ENCODE measurements at regions of chr5 and their contacts with region 1.

Region 1: DNA sequence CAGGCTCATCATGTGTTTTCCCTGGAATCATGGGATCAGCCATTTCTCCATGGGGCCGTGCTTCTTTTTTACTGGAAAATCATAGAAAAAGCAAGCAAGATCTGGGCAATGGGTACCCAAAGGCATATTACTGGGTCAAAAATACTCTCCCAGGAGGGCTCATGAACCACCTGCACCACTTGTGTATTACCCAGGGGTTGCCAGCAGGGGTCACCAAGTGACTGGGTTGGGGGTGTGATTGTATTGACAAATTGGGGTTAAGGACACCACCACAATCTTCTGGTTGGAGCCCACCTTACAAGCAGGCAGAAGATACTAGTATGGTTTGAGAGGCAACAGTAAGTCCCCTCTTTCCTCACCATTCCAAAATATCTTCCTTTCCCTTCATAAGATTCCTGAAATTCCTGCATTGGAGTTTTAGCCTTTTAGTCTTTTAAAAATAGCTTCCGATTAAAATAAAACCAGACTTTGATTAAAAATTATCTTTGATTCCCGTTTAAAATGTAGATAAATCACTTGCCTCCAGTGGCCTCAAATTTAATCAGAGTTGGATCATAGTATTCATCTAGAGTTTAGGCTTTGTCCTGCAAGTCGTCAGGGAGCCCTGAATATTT is 603.3 kb downstream of the KIF4B start:
- DNase-seq: no peak
- ATAC-seq: peak; percentile 44; the same call in 1 of the 2 replicates
- H3K4me3 ChIP-seq: no peak overlapping the region
- H3K27ac ChIP-seq: no peak overlapping the region
- H3K4me1 ChIP-seq: no peaks in the 10 kb centered on the region
- H3K27me3 ChIP-seq: no peaks in the 10 kb centered on the region
- CTCF ChIP-seq: peak; percentile 56
- POLR2A ChIP-seq: no peak
- RAD21 ChIP-seq: peak; percentile 72

Region 2: DNA sequence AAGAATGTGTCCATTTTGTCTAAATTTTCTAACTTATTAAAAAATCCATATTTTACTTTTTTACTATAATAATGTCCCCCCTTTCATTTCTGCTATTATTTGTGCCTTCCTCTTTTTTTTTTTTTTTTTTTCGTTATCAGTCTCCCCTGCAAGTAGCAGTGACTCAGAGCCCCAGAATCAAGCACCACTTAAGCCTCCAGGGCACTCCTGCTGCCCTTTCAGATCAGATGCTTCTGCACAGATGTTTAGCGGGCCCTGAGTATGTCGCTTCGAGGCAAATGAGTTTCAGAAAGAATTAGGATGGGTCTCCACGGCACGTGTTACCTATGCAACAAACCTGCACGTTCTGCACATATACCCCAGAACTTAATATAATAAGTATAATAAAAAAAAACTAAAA is 1514.0 kb after region 1 on chr5:
- CTCF ChIA-PET with region 1: no interaction called
- POLR2A ChIA-PET with region 1: no interaction called
- dilution Hi-C with region 1: no loop called
- in situ Hi-C with region 1: no loop called
- intact Hi-C with region 1: loop called (anchors 5 kb)
- DNase-seq: peak; percentile 21
- ATAC-seq: no peak
- H3K4me3 ChIP-seq: no peak overlapping the region
- H3K27ac ChIP-seq: no peak overlapping the region
- H3K4me1 ChIP-seq: no peaks in the 10 kb centered on the region
- H3K27me3 ChIP-seq: no peaks in the 10 kb centered on the region
- CTCF ChIP-seq: no peak
- POLR2A ChIP-seq: no peak
- RAD21 ChIP-seq: no peak

Measured in IMR-90 (cell line).